ENCODE measurements at regions of chr14 and their contacts with region 1.

Region 1: DNA sequence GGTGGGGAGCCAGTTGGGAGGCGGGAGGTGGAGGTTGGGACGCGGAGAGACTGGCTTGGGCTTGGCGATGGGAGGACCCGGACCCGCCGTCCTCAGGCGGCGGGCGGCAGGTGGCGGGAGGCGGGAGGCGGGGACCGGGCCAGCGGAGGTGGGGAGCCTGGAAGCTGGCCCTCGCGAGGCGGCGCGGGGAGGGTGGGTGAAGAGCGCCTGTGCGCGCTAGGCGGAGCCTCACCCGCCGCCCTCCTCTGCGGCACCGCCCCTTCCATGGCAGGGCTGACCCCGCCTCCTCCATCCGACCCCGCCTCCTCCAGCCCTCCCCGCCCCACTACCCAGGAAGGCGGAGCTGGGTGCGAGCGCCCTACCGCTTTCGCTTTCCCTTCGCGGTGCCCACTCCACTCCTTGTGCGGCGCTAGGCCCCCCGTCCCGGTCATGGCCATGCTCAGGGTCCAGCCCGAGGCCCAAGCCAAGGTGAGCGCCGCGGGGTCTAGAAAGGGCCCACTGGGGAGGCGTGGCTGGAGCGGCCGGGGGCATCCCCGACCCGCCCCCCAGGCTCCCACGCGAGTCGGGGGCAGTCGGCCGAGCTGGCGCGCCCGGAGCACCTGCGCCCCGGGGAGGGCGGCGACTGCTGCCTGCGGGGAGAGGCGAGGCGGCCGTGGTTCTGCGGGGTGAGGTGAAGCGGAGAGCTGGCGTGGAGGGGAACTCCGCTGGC is at the start of gene PSME1:
- DNase-seq: peak; percentile 96
- H3K4me3 Mint-ChIP-seq: peak within 1 kb of the TSS; percentile 93
- H3K27ac Mint-ChIP-seq: peak within 1 kb of the TSS; percentile 93
- H3K4me1 Mint-ChIP-seq: peaks cover 66% of the 10 kb centered on the region
- H3K27me3 Mint-ChIP-seq: no peaks in the 10 kb centered on the region

Region 2: DNA sequence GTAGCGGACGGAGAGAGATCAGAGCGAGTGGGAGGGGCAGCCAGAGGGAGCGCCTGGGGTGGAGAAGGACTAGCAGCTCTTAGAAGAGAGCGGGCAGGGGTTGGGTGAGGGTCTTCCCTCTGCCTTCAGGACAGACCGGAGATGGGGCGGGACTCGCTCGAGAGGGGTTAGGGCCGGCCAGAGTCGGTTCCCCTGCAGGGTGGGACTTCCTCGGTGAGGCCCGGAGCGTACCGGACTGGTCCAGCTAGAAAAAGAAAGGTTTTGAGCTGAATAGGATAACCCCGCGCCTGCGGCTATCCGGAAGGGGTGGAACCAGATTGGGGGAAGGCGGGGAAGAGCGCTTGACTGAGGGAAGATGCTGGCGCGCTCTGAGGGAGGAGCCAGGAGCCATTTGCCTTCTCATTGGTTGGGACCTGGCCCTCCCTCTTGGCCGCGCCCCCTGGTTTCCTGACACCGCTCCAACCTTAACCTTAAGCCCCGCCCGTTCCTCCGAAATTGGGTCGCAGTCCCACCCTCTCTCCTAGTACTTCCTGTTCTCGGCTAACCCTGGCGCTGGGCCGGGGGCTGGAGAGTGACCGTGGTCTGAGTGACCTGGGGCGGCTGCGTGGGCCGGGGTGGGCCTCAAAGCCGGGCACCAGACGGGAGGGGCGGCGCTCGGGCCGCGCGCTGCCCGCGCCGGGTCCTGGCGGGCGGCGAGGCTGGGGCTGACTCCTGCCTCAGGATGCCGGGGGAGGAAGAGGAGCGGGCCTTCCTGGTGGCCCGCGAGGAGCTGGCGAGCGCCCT is 11.2 kb after region 1 on chr14 and contains the start of gene RNF31:
- CTCF ChIA-PET with region 1: interaction called, 16 read pairs
- DNase-seq: peak; percentile 100
- H3K4me3 Mint-ChIP-seq: peak within 1 kb of the TSS; percentile 93
- H3K27ac Mint-ChIP-seq: peak within 1 kb of the TSS; percentile 99
- H3K4me1 Mint-ChIP-seq: peaks cover 65% of the 10 kb centered on the region
- H3K27me3 Mint-ChIP-seq: no peaks in the 10 kb centered on the region

Region 3: GRCh38 chr14:24279301-24280186 is 143.6 kb after region 1 on chr14:
- CTCF ChIA-PET with region 1: no interaction called
- DNase-seq: peak; percentile 55
- H3K4me3 Mint-ChIP-seq: no peak overlapping the region
- H3K27ac Mint-ChIP-seq: no peak overlapping the region
- H3K4me1 Mint-ChIP-seq: peaks cover 37% of the 10 kb centered on the region
- H3K27me3 Mint-ChIP-seq: peaks cover 13% of the 10 kb centered on the region